Activated T-helper 1 cell treated with anti-CD3 and anti-CD28 coated beads, Interleukin-12 subunit alpha, Interleukin-12 subunit beta, Interleukin-2, Interleukin-4 antibody, amounts not matched to agents 30 ng/mL and 10 ng/mL and 1 ng/mL, durations not matched to agents 14 hours and 24 hours and 36 hours (primary cell): ENCODE measurements at regions of chr2 and their contacts with region 1.

Region 1: GRCh38 chr2:12856934-12857601 is 140.3 kb downstream of the TRIB2 start:
- DNase-seq: peak; percentile 26
- H3K4me3 Mint-ChIP-seq: no peak overlapping the region
- H3K27ac Mint-ChIP-seq: no peak overlapping the region
- H3K4me1 Mint-ChIP-seq: peaks cover 18% of the 10 kb centered on the region
- H3K27me3 Mint-ChIP-seq: no peaks in the 10 kb centered on the region

Region 2: GRCh38 chr2:12787891-12788801 is 68.9 kb before region 1 on chr2:
- intact Hi-C with region 1: no loop called
- DNase-seq: no peak
- H3K4me3 Mint-ChIP-seq: no peak overlapping the region
- H3K27ac Mint-ChIP-seq: no peak overlapping the region
- H3K4me1 Mint-ChIP-seq: no peaks in the 10 kb centered on the region
- H3K27me3 Mint-ChIP-seq: peaks cover 6% of the 10 kb centered on the region

Region 3: DNA sequence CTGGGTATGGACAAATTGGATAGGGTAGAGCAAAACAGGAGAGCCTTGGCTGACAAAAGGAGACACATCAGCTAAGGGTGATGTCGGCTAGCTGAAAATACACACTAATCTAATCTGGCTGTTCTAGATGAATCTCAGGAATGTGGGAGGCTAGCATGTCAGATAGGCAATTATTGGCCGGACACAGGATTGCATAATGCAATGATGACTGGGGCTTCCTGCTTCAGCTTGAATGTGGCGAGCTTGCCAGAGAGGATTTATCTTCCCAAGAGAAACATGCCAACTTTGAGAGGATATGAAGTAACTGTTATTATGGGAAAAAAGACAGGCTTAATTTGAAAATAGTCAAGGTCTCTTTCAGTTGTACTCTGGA is 38.0 kb before region 1 on chr2:
- intact Hi-C with region 1: no loop called
- DNase-seq: no peak
- H3K4me3 Mint-ChIP-seq: no peak overlapping the region
- H3K27ac Mint-ChIP-seq: no peak overlapping the region
- H3K4me1 Mint-ChIP-seq: peaks cover 5% of the 10 kb centered on the region
- H3K27me3 Mint-ChIP-seq: peaks cover 13% of the 10 kb centered on the region

Region 4: GRCh38 chr2:12965540-12966269 is 108.6 kb after region 1 on chr2:
- intact Hi-C with region 1: loop called (anchors 5 kb)
- DNase-seq: no peak
- H3K4me3 Mint-ChIP-seq: peak overlapping the region; percentile 12
- H3K27ac Mint-ChIP-seq: peak overlapping the region; percentile 21
- H3K4me1 Mint-ChIP-seq: peaks cover 23% of the 10 kb centered on the region
- H3K27me3 Mint-ChIP-seq: peaks cover 13% of the 10 kb centered on the region